ENCODE measurements at regions of chr19 and their contacts with region 1.

Region 1: DNA sequence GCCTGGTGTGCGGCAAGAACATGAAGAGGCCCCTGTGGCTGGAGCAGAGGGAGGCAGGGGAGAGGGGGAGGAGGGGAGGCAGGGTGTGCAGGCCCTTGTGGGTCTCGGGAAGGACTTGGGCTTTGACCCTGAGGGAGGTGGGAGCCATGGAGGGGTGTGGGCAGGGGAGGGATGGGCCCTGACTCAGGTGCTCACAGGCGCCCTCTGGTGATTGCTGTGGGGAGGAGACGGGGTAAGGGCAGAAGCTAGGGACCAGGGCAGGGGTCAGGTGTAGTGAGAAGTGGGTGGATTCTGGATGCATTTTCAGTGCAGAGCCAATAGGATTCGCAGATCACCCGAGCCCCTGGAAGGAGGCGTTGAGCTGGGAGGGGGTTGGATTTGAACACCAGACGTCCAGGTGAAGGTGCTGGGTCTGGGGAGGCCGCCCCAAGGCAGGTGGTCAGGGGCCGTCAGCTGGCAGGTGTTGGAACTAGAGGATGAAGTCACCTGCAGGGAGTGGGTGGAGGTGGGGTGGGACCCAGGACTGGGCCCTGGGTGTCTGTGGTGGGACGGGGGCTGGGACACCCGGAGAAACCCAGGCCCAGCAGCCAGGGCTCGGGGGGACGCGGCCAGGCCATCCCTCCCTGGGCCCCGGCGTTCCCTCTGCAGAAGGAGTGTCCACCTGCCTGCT is 185.4 kb downstream of the KDM4B start:
- DNase-seq: peak; percentile 63 to 65
- H3K4me3 ChIP-seq: no peak overlapping the region
- H3K4me3 Mint-ChIP-seq: no peak overlapping the region
- H3K27ac Mint-ChIP-seq: no peak overlapping the region
- H3K4me1 ChIP-seq: no peaks in the 10 kb centered on the region
- H3K4me1 Mint-ChIP-seq: no peaks in the 10 kb centered on the region
- H3K27me3 ChIP-seq: no peaks in the 10 kb centered on the region
- H3K27me3 Mint-ChIP-seq: no peaks in the 10 kb centered on the region
- CTCF ChIP-seq: peak; percentile 52 to 62

Region 2: GRCh38 chr19:5025027-5025426 is 129.2 kb before region 1 on chr19:
- CTCF ChIA-PET with region 1: interaction called, 10 read pairs
- POLR2A ChIA-PET with region 1: no interaction called
- intact Hi-C with region 1: no loop called
- DNase-seq: no peak
- H3K4me3 ChIP-seq: no peak overlapping the region
- H3K4me3 Mint-ChIP-seq: no peak overlapping the region
- H3K27ac Mint-ChIP-seq: no peak overlapping the region
- H3K4me1 ChIP-seq: no peaks in the 10 kb centered on the region
- H3K4me1 Mint-ChIP-seq: no peaks in the 10 kb centered on the region
- H3K27me3 ChIP-seq: no peaks in the 10 kb centered on the region
- H3K27me3 Mint-ChIP-seq: no peaks in the 10 kb centered on the region
- CTCF ChIP-seq: no peak

Region 3: GRCh38 chr19:5048091-5048726 is 106.1 kb before region 1 on chr19:
- CTCF ChIA-PET with region 1: interaction called, 6 read pairs
- POLR2A ChIA-PET with region 1: no interaction called
- intact Hi-C with region 1: loop called (anchors 1 kb)
- DNase-seq: peak; percentile 81 to 86
- H3K4me3 ChIP-seq: no peak overlapping the region
- H3K4me3 Mint-ChIP-seq: no peak overlapping the region
- H3K27ac Mint-ChIP-seq: no peak overlapping the region
- H3K4me1 ChIP-seq: peaks cover 27% of the 10 kb centered on the region
- H3K4me1 Mint-ChIP-seq: peaks cover 14% of the 10 kb centered on the region
- H3K27me3 ChIP-seq: no peaks in the 10 kb centered on the region
- H3K27me3 Mint-ChIP-seq: no peaks in the 10 kb centered on the region
- CTCF ChIP-seq: peak; percentile 96

Region 4: DNA sequence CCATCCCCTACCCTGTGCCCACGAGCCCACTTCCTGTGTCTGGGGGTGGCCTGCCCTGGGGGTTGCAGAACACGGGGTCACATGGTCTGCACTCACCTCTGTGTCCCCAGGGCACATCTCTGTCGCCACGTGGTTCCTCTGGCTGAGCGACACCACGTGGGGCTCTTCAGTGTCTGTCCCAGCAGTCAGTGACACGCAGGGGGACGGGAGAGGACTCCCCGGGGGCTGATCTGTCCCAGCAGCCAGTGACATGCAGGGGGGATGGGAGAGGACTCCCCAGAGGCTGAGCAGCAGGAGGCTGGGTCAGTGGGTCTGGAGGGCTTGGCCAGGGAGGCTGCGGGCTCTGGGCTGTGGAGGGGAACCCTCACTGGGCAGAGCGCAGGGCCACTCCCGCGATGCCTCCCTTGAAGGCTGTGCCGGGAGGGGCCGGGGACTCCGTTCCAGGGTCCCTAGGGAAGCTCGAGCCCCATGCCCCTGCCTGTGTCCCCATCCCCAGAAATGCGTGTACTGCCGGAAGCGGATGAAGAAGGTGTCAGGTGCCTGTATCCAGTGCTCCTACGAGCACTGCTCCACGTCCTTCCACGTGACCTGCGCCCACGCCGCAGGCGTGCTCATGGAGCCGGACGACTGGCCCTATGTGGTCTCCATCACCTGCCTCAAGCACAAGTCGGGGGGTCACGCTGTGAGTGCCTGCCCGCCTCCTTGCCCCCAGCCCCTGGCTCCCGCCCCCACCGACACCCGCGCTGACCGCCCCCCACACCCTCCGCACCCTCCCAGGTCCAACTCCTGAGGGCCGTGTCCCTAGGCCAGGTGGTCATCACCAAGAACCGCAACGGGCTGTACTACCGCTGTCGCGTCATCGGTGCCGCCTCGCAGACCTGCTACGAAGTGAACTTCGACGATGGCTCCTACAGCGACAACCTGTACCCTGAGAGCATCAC is 10.5 kb before region 1 on chr19:
- CTCF ChIA-PET with region 1: no interaction called
- POLR2A ChIA-PET with region 1: no interaction called
- intact Hi-C with region 1: no loop called
- DNase-seq: no peak
- H3K4me3 ChIP-seq: no peak overlapping the region
- H3K4me3 Mint-ChIP-seq: no peak overlapping the region
- H3K27ac Mint-ChIP-seq: no peak overlapping the region
- H3K4me1 ChIP-seq: no peaks in the 10 kb centered on the region
- H3K4me1 Mint-ChIP-seq: no peaks in the 10 kb centered on the region
- H3K27me3 ChIP-seq: no peaks in the 10 kb centered on the region
- H3K27me3 Mint-ChIP-seq: no peaks in the 10 kb centered on the region
- CTCF ChIP-seq: no peak